ENCODE measurements at regions of chr2 and their contacts with region 1.

Region 1: DNA sequence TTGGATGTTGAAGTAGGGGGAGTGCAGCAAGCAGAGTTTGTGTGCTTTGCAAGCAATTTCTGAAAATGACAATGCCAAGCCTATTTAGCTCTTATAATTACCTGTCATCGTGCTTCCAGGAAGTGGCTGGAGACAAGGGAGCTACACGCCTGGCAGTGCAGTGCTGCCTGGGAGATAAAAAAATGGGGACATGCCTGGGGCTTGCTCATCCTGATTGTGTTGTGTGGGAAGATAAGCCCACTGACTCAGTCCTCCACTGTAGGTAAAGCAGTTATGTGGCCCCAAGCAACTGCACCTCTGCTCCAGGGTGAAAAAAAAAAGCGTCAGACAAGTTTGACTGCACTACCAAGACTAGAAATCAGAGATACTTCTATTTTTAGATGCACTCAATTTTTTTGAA is 396.9 kb upstream of the NXPH2 start:
- DNase-seq: no peak
- ATAC-seq: no peak
- H3K4me3 ChIP-seq: no peak overlapping the region
- H3K27ac ChIP-seq: no peak overlapping the region
- H3K4me1 ChIP-seq: no peaks in the 10 kb centered on the region
- H3K27me3 ChIP-seq: no peaks in the 10 kb centered on the region
- CTCF ChIP-seq: no peak

Region 2: GRCh38 chr2:139067072-139067471 is 110.0 kb before region 1 on chr2:
- intact Hi-C with region 1: no loop called
- DNase-seq: no peak
- ATAC-seq: no peak
- H3K4me3 ChIP-seq: no peak overlapping the region
- H3K27ac ChIP-seq: no peak overlapping the region
- H3K4me1 ChIP-seq: no peaks in the 10 kb centered on the region
- H3K27me3 ChIP-seq: no peaks in the 10 kb centered on the region
- CTCF ChIP-seq: no peak

Region 3: GRCh38 chr2:139159177-139159576 is 17.9 kb before region 1 on chr2:
- intact Hi-C with region 1: loop called in 1 of 10 experiments (anchors 2 kb)
- DNase-seq: no peak
- ATAC-seq: no peak
- H3K4me3 ChIP-seq: no peak overlapping the region
- H3K27ac ChIP-seq: no peak overlapping the region
- H3K4me1 ChIP-seq: no peaks in the 10 kb centered on the region
- H3K27me3 ChIP-seq: no peaks in the 10 kb centered on the region
- CTCF ChIP-seq: no peak